B cell (primary cell): ENCODE measurements at regions of chr5 and their contacts with region 1.

Region 1: DNA sequence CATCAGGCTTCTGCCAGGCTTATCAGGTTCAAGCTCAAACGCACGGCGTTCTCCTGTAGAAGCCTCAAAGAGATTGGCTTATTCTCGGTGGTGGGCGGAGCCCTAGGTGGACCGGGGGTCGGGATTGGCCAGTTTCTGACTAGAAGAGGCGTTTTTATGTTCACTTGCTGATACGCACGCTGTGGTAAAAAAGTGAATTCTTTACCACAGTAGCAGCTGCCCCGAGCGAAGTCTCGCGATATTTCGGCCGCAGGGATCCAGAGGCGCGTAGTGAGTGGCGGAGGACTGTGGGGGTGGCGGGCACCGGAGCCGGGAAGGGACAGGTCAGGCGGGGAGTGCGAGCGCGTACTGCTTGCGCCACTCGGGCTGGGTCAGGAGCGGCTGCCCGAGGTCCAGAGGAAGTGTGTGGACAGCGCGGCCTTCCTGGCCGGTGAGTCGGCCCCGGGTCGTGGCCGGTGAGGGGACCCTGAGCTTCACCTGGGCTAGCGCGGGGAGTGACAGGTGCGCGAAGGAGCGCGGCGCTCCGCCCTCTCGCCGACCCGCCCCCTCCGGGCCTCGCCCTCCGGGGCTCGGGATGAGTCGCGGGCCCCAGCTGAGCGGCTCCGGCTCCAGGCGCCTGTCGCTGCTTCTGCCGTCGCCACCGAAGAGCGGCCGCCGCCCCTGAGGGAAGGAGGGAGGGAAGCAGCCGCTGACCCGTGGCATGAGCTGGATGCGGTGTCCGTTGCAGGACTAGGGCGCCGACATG is at the start of gene DMXL1:
- DNase-seq: peak; percentile 99
- ATAC-seq: peak; percentile 81
- H3K4me3 ChIP-seq: peak within 1 kb of the TSS; percentile 66 to 98 (median 91)
- H3K4me3 Mint-ChIP-seq: peak within 1 kb of the TSS; percentile 99
- H3K27ac ChIP-seq: peak within 1 kb of the TSS; percentile 94 to 97
- H3K27ac Mint-ChIP-seq: peak within 1 kb of the TSS; percentile 100
- H3K4me1 ChIP-seq: peaks cover 35 to 43% of the 10 kb centered on the region in 2 donors
- H3K4me1 Mint-ChIP-seq: peaks cover 40% of the 10 kb centered on the region
- H3K27me3 ChIP-seq: no peaks in the 10 kb centered on the region
- H3K27me3 Mint-ChIP-seq: no peaks in the 10 kb centered on the region
- CTCF ChIP-seq: no peak
- total RNA-seq, gene DMXL1: 129 and 135 TPM in 2 replicates

Region 2: GRCh38 chr5:117077142-117077541 is 1993.9 kb before region 1 on chr5:
- CTCF ChIA-PET with region 1: no interaction called
- POLR2A ChIA-PET with region 1: no interaction called
- intact Hi-C with region 1: no loop called
- DNase-seq: no peak
- ATAC-seq: no peak
- H3K4me3 ChIP-seq: no peak overlapping the region
- H3K4me3 Mint-ChIP-seq: no peak overlapping the region
- H3K27ac ChIP-seq: no peak overlapping the region
- H3K27ac Mint-ChIP-seq: no peak overlapping the region
- H3K4me1 ChIP-seq: no peaks in the 10 kb centered on the region
- H3K4me1 Mint-ChIP-seq: no peaks in the 10 kb centered on the region
- H3K27me3 ChIP-seq: no peaks in the 10 kb centered on the region
- H3K27me3 Mint-ChIP-seq: no peaks in the 10 kb centered on the region
- CTCF ChIP-seq: no peak

Region 3: DNA sequence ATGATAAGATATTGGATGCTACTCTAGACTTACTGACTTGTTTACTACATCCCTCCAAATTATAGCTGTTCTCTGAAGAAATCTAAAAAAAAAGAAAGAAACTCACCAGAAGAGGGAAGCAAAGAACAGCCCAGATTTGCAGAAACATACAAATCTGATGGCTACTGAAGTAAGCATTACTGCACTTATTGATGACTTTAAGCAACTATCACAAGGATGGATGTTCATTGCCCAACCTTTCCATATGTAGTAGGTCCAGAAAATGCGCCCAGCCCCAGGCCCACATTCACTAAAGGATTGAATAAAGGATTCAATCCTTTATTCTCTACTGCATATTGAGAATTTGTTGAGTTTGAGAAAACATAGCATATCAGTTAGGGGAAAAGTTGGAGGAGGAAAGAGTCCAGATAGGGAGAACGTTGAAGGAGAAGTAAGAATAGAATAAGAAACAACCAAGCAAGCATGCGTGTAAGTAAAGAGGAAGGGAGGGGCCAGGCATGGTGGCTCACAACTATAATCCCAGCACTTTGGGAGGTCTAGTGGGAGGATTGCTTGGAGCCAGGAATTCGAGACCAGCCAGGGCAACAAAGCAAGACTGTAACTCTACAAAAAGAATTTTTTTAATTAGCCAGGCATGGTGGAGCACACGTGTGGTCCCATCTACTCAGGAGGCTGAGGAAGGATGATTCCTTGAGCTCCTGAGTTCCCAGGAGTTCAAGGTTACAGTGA is 48.8 kb before region 1 on chr5:
- CTCF ChIA-PET with region 1: interaction called, 18 read pairs
- POLR2A ChIA-PET with region 1: interaction called, 15 read pairs
- intact Hi-C with region 1: loop called (anchors 1 kb)
- DNase-seq: peak; percentile 68
- ATAC-seq: peak; percentile 62
- H3K4me3 ChIP-seq: peak overlapping the region in 1 of 5 experiments; percentile 7
- H3K4me3 Mint-ChIP-seq: peak overlapping the region; percentile 40
- H3K27ac ChIP-seq: peak overlapping the region; percentile 30 to 78
- H3K27ac Mint-ChIP-seq: peak overlapping the region; percentile 82
- H3K4me1 ChIP-seq: peaks cover 64 to 67% of the 10 kb centered on the region in 2 donors
- H3K4me1 Mint-ChIP-seq: peaks cover 65% of the 10 kb centered on the region
- H3K27me3 ChIP-seq: no peaks in the 10 kb centered on the region
- H3K27me3 Mint-ChIP-seq: no peaks in the 10 kb centered on the region
- CTCF ChIP-seq: peak; percentile 67

Region 4: GRCh38 chr5:119088438-119088837 is 17.4 kb after region 1 on chr5:
- CTCF ChIA-PET with region 1: no interaction called
- POLR2A ChIA-PET with region 1: no interaction called
- intact Hi-C with region 1: loop called (anchors 2 kb)
- DNase-seq: no peak
- ATAC-seq: no peak
- H3K4me3 ChIP-seq: no peak overlapping the region
- H3K4me3 Mint-ChIP-seq: no peak overlapping the region
- H3K27ac ChIP-seq: peak overlapping the region in 1 of 2 donors; percentile 55
- H3K27ac Mint-ChIP-seq: peak overlapping the region; percentile 62
- H3K4me1 ChIP-seq: peaks cover 12 to 30% of the 10 kb centered on the region in 2 donors
- H3K4me1 Mint-ChIP-seq: peaks cover 58% of the 10 kb centered on the region
- H3K27me3 ChIP-seq: no peaks in the 10 kb centered on the region
- H3K27me3 Mint-ChIP-seq: no peaks in the 10 kb centered on the region
- CTCF ChIP-seq: no peak

Region 5: DNA sequence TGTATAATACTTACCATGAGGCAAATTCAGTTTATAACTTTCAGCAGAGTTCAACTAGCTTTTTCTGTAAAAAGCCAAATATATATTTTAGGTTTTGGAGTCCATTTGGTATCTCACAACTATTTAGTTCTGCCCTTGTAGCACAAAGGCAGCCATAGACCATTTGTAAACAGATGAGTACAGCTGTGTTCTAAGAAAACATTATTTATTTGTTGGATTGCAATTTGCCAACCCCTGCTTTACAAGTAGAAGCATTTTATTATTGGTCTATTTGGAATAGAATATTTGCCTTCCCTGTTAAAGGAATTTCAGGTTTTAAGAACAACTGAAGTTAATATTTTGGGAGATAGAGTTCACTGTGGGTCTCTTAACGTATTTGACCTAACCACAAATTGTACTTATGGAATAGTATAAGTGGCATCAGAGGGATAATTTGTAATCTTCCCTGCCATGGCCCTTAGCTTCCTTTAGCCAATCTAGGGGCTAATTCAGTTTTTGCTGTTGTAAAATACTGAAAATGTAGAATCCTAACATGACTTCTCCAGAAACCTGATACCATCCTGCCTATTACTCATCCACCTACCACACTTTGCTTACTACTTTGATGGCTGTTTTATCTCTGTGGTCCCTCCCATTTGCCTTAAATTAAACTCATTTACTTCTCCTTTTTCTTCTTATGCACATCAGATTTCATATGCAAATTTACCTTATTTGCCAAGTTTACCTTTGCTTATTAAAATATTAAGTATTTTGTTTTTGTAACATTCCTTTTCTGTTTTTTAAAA is 109.0 kb after region 1 on chr5:
- CTCF ChIA-PET with region 1: no interaction called
- POLR2A ChIA-PET with region 1: interaction called, 3 read pairs
- intact Hi-C with region 1: loop called (anchors 5 kb)
- DNase-seq: no peak
- ATAC-seq: no peak
- H3K4me3 ChIP-seq: no peak overlapping the region
- H3K4me3 Mint-ChIP-seq: no peak overlapping the region
- H3K27ac ChIP-seq: no peak overlapping the region
- H3K27ac Mint-ChIP-seq: peak overlapping the region; percentile 22
- H3K4me1 ChIP-seq: peaks cover 3 to 18% of the 10 kb centered on the region in 2 donors
- H3K4me1 Mint-ChIP-seq: peaks cover 19% of the 10 kb centered on the region
- H3K27me3 ChIP-seq: no peaks in the 10 kb centered on the region
- H3K27me3 Mint-ChIP-seq: no peaks in the 10 kb centered on the region
- CTCF ChIP-seq: no peak

Region 6: GRCh38 chr5:119229950-119230349 is 158.9 kb after region 1 on chr5:
- CTCF ChIA-PET with region 1: no interaction called
- POLR2A ChIA-PET with region 1: no interaction called
- intact Hi-C with region 1: no loop called
- DNase-seq: no peak
- ATAC-seq: no peak
- H3K4me3 ChIP-seq: no peak overlapping the region
- H3K4me3 Mint-ChIP-seq: no peak overlapping the region
- H3K27ac ChIP-seq: no peak overlapping the region
- H3K27ac Mint-ChIP-seq: no peak overlapping the region
- H3K4me1 ChIP-seq: no peaks in the 10 kb centered on the region
- H3K4me1 Mint-ChIP-seq: no peaks in the 10 kb centered on the region
- H3K27me3 ChIP-seq: no peaks in the 10 kb centered on the region
- H3K27me3 Mint-ChIP-seq: no peaks in the 10 kb centered on the region
- CTCF ChIP-seq: no peak

Region 7: DNA sequence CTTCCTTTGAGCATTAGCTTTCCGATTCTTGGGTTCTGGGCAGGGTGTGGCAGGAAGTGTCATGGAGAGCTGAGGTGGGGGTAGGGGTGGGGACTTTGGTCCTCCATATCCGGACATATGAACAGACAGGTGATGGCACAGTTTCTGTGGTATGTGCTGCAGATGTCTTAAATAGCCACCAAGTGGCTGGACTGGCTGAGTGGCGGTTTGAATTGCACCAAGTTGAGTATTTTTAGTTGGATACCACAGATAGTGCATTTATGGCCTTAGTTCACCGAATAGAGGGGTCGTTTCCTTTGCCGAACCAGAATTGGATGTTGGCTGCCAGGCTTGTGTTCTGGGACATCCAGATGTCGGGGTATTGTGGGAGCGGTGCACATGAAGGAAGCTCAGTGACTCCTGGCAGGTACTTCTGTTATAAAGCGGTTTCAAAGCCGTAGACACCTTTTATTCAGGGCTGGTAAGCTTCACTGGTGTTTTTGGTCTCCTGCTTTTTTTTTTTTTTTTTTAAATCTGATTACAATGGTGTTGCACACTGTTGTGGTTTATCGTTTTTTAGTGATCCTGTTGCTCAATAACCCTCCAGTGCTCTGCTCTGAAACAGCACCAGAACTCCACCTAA is 269.7 kb after region 1 on chr5:
- CTCF ChIA-PET with region 1: no interaction called
- POLR2A ChIA-PET with region 1: interaction called, 3 read pairs
- intact Hi-C with region 1: loop called (anchors 5 kb)
- DNase-seq: peak; percentile 68
- ATAC-seq: peak; percentile 22
- H3K4me3 ChIP-seq: peak overlapping the region in 4 of 5 experiments; percentile 5 to 45 (median 22)
- H3K4me3 Mint-ChIP-seq: peak overlapping the region; percentile 85
- H3K27ac ChIP-seq: peak overlapping the region; percentile 87 to 91
- H3K27ac Mint-ChIP-seq: peak overlapping the region; percentile 95
- H3K4me1 ChIP-seq: peaks cover 95 to 96% of the 10 kb centered on the region in 2 donors
- H3K4me1 Mint-ChIP-seq: peaks cover 94% of the 10 kb centered on the region
- H3K27me3 ChIP-seq: no peaks in the 10 kb centered on the region
- H3K27me3 Mint-ChIP-seq: no peaks in the 10 kb centered on the region
- CTCF ChIP-seq: no peak

Region 8: DNA sequence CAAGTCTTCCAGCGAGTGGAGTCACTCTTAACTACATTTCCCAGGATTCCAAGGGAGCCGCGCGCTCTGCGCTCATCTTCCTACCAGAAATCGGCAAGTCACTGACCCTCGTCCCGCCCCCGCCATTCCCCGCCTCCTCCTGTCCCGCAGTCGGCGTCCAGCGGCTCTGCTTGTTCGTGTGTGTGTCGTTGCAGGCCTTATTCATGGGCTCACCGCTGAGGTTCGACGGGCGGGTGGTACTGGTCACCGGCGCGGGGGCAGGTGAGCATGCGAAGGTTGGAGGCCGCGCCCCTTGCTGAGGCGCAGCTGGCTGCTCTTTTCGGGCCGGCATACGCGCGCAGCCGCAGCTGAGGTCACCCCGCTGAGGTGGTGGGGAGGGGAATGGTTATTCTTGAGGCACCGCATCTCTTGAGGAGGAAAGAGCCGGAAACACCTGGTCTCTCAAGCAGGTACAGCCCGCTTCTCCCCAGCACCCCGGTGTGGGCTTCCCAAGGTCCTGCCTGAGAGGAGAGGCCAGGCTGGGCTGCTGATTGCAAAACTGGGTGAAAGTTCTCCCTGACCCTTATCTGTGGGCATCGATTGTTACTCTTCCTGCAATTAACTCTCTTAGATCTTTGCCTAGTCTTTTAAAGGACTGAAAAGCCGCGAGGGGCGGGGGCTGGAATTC is 381.5 kb after region 1 on chr5 and contains the start of gene HSD17B4:
- CTCF ChIA-PET with region 1: no interaction called
- POLR2A ChIA-PET with region 1: no interaction called
- intact Hi-C with region 1: loop called (anchors 2 kb)
- DNase-seq: peak; percentile 92
- ATAC-seq: peak; percentile 93
- H3K4me3 ChIP-seq: peak within 1 kb of the TSS; percentile 69 to 89 (median 77)
- H3K4me3 Mint-ChIP-seq: peak within 1 kb of the TSS; percentile 96
- H3K27ac ChIP-seq: peak within 1 kb of the TSS; percentile 86 to 87
- H3K27ac Mint-ChIP-seq: peak within 1 kb of the TSS; percentile 97
- H3K4me1 ChIP-seq: peaks cover 32% of the 10 kb centered on the region in 2 donors
- H3K4me1 Mint-ChIP-seq: peaks cover 53% of the 10 kb centered on the region
- H3K27me3 ChIP-seq: no peaks in the 10 kb centered on the region
- H3K27me3 Mint-ChIP-seq: no peaks in the 10 kb centered on the region
- CTCF ChIP-seq: no peak
- total RNA-seq, gene HSD17B4: 112 and 114 TPM in 2 replicates

Region 9: DNA sequence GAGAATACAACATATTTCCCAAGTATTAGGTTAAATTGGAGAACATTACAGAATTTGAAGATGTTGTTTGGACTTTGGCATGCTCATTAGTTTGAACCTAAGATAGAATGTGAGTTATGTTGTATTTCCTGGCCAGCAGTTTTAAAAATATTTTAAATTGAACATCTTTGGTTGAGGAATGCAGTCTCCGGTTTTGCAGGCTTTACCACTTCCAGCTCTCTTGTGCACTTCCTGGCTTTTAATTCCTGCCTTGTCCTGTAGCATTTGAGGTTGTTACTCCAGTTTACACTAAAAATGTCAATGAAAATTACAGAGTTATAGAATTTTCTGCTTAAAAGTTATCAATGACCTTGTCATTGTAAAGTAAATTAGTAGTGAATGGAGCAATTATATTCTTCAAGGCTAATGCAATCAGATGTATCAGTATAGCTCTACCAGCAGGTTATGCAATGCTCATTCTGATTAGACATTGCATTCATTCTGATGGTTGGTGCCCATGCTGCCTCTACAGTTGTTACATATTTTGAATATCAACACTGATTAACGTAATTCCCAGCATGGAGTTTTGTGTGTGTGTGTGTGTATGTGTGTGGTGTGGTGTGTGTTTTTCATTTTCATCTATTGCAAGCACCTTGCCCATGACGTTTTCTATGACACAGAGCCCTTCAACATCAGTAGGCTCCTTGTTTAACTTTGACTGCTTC is 903.9 kb after region 1 on chr5:
- CTCF ChIA-PET with region 1: no interaction called
- POLR2A ChIA-PET with region 1: no interaction called
- intact Hi-C with region 1: no loop called
- DNase-seq: no peak
- ATAC-seq: no peak
- H3K4me3 ChIP-seq: no peak overlapping the region
- H3K4me3 Mint-ChIP-seq: no peak overlapping the region
- H3K27ac ChIP-seq: no peak overlapping the region
- H3K27ac Mint-ChIP-seq: no peak overlapping the region
- H3K4me1 ChIP-seq: no peaks in the 10 kb centered on the region
- H3K4me1 Mint-ChIP-seq: no peaks in the 10 kb centered on the region
- H3K27me3 ChIP-seq: no peaks in the 10 kb centered on the region
- H3K27me3 Mint-ChIP-seq: no peaks in the 10 kb centered on the region
- CTCF ChIP-seq: no peak